Gastrocnemius medialis (tissue), 4 donors: ENCODE measurements at regions of chr17 and their contacts with region 1.

Region 1: DNA sequence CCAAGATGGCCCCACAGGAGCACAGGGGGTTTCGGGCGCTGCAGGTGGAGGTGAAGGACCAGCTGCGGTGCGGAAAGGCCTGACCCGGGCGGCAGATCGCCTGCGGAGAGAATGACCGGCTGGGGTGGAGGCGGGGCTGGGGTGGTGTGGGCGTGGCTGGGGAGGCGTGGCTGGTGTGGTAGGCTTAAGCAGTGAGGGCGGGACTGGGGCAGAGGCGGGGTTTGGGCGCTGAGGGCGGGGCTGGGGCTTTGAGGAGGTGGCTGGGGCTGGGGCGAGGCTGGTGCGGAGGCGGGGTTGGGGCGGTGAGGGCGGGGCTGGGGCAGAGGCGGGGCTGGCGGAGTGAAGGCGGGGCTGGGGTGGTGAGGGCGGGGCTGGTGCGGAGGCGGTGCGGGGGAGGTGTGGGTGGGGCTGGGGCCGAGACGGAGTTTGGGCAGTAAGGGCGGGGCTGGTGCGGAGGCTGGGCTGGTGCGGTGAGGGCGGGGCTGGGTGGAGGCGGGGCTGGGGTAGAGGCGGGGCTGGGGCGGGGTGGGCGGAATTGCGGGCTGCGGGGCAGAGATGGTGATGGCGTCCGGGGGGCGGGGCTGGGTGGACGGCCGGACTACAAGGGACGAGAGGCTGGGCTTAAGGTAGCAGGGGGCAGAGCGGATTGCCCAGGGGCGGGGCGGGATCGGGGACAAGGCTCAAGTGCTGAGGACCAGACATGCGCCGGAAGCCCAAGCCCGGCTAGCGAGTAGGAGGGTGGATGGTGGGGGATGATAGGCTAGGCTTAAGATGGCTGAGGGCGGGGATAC is 9.9 kb upstream of the GSDMA start:
- DNase-seq: peak; percentile 97 to 99
- ATAC-seq: peak; percentile 82 to 85
- H3K4me3 ChIP-seq: peak overlapping the region; percentile 50 to 68 (median 52)
- H3K27ac ChIP-seq: peak overlapping the region; percentile 73 to 80 (median 76)
- H3K4me1 ChIP-seq: peaks cover 6 to 8% of the 10 kb centered on the region in 2 donors
- H3K27me3 ChIP-seq: no peaks in the 10 kb centered on the region
- CTCF ChIP-seq: no peak
- POLR2A ChIP-seq: peak in 1 of 2 donors; percentile 4

Region 2: DNA sequence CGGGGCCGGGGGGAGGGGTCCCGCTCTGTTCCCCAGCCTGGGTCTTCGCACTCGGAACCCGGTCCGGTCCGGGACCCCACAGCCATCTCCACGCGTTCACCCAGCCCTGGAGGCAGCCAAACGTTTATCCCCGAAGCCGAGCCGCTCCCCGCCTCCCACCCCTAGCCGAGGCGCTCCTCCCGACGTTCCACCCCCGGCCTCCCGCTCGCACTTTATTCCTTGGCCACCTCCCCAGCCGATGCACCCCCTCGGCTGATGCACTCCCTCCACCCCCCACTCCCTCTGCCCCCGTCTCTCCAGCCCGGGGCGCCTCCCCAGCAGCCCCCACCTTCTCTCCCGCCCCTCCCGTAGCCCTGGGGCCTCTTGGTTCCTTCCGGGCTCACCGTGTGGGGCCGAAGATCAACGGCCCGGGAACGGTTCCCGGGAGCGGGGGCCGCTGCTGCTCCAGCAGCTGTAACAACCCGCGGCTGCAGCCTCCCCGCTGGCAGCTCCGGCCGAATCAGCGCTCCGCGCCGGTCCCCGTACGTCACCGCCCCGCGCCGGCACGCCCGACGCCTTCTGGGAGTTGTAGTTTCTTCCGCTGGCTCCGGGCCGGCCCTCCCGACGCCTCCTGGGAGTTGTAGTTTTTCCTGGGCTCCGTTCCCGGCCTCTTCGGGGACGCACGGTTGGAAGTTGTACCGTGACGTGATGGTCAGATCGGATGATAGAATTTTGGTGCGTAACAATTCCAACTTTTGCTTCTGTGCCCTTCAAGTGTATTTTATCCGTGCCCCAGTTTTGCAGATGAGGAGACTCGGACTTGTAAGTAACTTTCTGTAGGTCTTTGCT is 25.6 kb before region 1 on chr17 and contains the starts of genes LRRC3C and ORMDL3:
- in situ Hi-C with region 1: no loop called
- intact Hi-C with region 1: loop called (anchors 1 kb)
- DNase-seq: peak; percentile 89 to 91
- ATAC-seq: peak; percentile 77 to 82
- H3K4me3 ChIP-seq: peak within 1 kb of the TSS; percentile 96 to 99 (median 98)
- H3K27ac ChIP-seq: peak within 1 kb of the TSS; percentile 90 to 99 (median 96)
- H3K4me1 ChIP-seq: peaks cover 35 to 46% of the 10 kb centered on the region in 2 donors
- H3K27me3 ChIP-seq: no peaks in the 10 kb centered on the region
- CTCF ChIP-seq: peak in 1 of 5 experiments; percentile 11
- POLR2A ChIP-seq: peak; percentile 67 to 84
- total RNA-seq, gene LRRC3C: not detected
- total RNA-seq, gene ORMDL3: 17.3 to 36.2 (median 29.6) TPM

Region 3: DNA sequence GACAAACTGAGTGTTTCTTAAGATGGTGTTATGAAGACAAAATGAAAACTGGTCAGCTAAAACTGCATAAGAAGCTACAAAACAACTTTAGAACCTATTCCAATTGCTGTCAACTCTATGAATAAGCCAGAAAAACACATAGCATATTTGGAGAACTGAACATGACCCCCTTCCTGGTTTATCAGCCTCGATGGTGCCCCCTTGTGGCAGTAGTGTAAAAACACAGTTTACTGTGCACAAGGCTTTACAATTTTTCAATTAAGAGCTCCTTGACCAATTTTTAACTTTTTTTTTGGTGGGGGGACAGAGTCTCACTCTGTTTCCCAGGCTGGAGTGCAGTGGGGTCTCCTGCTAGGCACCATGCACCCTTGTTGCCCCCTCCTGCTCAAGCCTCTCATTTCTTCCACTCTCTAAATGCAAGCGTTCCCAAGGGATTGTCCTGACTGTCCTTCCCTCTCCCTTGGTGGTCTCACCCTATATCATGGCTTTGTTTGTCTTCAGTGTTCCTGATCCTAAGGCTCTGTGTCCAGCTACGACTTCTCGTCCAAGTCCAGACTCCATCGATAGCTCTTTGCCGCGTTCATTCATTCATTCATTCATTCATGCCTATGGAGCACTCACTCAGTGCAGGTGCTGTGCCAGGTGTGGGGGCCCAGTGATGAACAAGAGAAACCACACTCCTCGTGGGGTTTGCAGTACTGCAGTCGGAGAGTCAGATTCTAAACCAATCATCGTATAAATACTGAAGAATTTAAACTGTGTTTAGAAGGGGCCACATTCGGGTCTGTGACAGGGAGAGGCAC is 1743.3 kb after region 1 on chr17:
- in situ Hi-C with region 1: no loop called
- intact Hi-C with region 1: loop called (anchors 10 kb)
- DNase-seq: peak in 1 of 2 donors; percentile 54
- ATAC-seq: no peak
- H3K4me3 ChIP-seq: no peak overlapping the region
- H3K27ac ChIP-seq: peak overlapping the region; percentile 85 to 96 (median 90)
- H3K4me1 ChIP-seq: peaks cover 31 to 32% of the 10 kb centered on the region in 2 donors
- H3K27me3 ChIP-seq: no peaks in the 10 kb centered on the region
- CTCF ChIP-seq: peak; percentile 68 to 86 (median 77)
- POLR2A ChIP-seq: no peak